Caco-2 (cell line): ENCODE measurements at regions of chr7 and their contacts with region 1.

Region 1: DNA sequence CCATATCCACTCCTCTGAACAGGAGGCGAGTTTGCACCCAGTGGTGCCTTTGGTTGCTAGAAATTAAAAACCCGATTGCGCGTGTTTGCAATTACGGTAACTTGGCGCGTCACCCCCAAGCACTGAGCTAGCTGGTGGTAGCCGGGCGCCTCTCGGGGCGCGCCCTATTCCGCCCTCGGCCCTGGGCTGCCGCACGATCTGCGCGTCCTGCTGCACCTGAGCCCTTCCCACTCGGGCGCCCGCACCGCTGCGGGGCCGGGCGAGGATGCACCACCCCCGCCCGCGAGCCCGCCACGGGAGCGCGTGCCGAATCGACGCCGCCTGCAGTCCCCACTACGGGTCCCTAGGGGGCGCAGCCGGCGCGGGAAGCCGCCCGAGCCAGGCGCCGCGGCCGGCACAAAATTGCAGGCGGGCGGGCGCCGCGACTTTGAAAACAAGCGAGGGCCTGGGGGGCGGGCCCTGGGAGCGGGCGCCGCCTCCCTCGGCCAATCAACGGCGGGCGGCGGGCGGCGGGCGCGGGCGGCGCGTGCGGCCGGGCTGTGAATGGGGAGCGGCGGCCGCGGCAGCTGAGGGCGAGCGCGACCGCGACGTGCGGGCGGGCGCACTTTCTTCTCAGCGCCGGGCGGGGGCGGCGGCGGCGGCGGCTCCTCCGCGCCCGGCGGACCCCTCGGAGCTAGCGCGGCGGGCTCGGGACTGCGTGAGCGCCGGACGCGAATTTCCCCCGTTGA is at the start of gene SDK1:
- DNase-seq: peak; percentile 85 to 95
- H3K4me3 ChIP-seq: peak within 1 kb of the TSS; percentile 63
- H3K4me3 Mint-ChIP-seq: peak within 1 kb of the TSS; percentile 67
- H3K27ac Mint-ChIP-seq: no peak within 1 kb of the TSS
- H3K4me1 ChIP-seq: no peaks in the 10 kb centered on the region
- H3K4me1 Mint-ChIP-seq: no peaks in the 10 kb centered on the region
- H3K27me3 ChIP-seq: no peaks in the 10 kb centered on the region; the same call in 1 of the 2 replicates
- H3K27me3 Mint-ChIP-seq: no peaks in the 10 kb centered on the region
- CTCF ChIP-seq: peak; percentile 65 to 86
- total RNA-seq, gene SDK1: 6.2 and 7.1 TPM in 2 replicates

Region 2: GRCh38 chr7:2542026-2542915 is 758.5 kb before region 1 on chr7:
- CTCF ChIA-PET with region 1: no interaction called
- POLR2A ChIA-PET with region 1: no interaction called
- intact Hi-C with region 1: no loop called
- DNase-seq: no peak
- H3K4me3 ChIP-seq: no peak overlapping the region
- H3K4me3 Mint-ChIP-seq: no peak overlapping the region
- H3K27ac Mint-ChIP-seq: no peak overlapping the region
- H3K4me1 ChIP-seq: no peaks in the 10 kb centered on the region
- H3K4me1 Mint-ChIP-seq: no peaks in the 10 kb centered on the region
- H3K27me3 ChIP-seq: no peaks in the 10 kb centered on the region
- H3K27me3 Mint-ChIP-seq: no peaks in the 10 kb centered on the region
- CTCF ChIP-seq: no peak

Region 3: DNA sequence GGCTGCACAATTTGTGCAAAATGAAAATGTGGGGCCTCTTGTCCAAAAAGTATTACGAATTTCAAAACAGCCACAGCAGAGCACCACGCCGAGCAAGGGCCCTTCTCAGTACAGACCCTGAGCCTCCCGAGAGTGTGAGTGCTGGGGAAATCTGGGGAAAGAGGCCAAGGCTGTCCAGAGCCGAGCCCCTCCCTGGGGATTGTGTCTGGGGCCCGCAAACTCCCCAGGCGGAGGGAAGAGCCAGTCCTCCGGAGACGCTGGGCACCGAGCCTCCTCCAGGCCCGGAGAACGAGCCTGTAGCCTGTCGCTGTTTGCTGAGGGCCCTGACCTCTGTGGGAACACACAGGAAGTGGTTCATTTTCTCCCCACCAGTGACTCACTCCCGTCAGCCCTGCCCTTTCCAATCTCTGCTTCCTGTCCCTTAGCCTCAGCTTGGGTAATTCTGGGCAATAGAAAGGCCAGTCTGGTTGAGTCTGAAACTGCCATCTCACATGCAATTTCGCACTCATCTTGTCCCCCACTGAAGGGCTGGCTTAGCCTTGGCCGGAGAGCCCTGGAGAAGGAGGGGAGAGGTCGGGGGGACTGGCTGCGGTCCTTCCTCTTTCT is 437.3 kb before region 1 on chr7:
- CTCF ChIA-PET with region 1: no interaction called
- POLR2A ChIA-PET with region 1: no interaction called
- intact Hi-C with region 1: loop called (anchors 2 kb)
- DNase-seq: no peak
- H3K4me3 ChIP-seq: no peak overlapping the region
- H3K4me3 Mint-ChIP-seq: no peak overlapping the region
- H3K27ac Mint-ChIP-seq: peak overlapping the region; percentile 82
- H3K4me1 ChIP-seq: peaks cover 7% of the 10 kb centered on the region; the same call in 1 of the 2 replicates
- H3K4me1 Mint-ChIP-seq: no peaks in the 10 kb centered on the region
- H3K27me3 ChIP-seq: no peaks in the 10 kb centered on the region
- H3K27me3 Mint-ChIP-seq: no peaks in the 10 kb centered on the region
- CTCF ChIP-seq: no peak

Region 4: GRCh38 chr7:3399858-3400257 is 99.0 kb after region 1 on chr7:
- CTCF ChIA-PET with region 1: interaction called, 11 read pairs
- POLR2A ChIA-PET with region 1: no interaction called
- intact Hi-C with region 1: loop called (anchors 2 kb)
- DNase-seq: peak; percentile 53 to 54
- H3K4me3 ChIP-seq: no peak overlapping the region
- H3K4me3 Mint-ChIP-seq: no peak overlapping the region
- H3K27ac Mint-ChIP-seq: no peak overlapping the region
- H3K4me1 ChIP-seq: no peaks in the 10 kb centered on the region
- H3K4me1 Mint-ChIP-seq: no peaks in the 10 kb centered on the region
- H3K27me3 ChIP-seq: no peaks in the 10 kb centered on the region
- H3K27me3 Mint-ChIP-seq: peaks cover 4% of the 10 kb centered on the region
- CTCF ChIP-seq: peak; percentile 37 to 62

Region 5: GRCh38 chr7:3469641-3470040 is 168.8 kb after region 1 on chr7:
- CTCF ChIA-PET with region 1: no interaction called
- POLR2A ChIA-PET with region 1: no interaction called
- intact Hi-C with region 1: loop called (anchors 5 kb)
- DNase-seq: peak in 1 of 2 experiments; percentile 33
- H3K4me3 ChIP-seq: no peak overlapping the region
- H3K4me3 Mint-ChIP-seq: no peak overlapping the region
- H3K27ac Mint-ChIP-seq: no peak overlapping the region
- H3K4me1 ChIP-seq: peaks cover 24% of the 10 kb centered on the region
- H3K4me1 Mint-ChIP-seq: peaks cover 29% of the 10 kb centered on the region
- H3K27me3 ChIP-seq: no peaks in the 10 kb centered on the region
- H3K27me3 Mint-ChIP-seq: no peaks in the 10 kb centered on the region
- CTCF ChIP-seq: no peak

Region 6: DNA sequence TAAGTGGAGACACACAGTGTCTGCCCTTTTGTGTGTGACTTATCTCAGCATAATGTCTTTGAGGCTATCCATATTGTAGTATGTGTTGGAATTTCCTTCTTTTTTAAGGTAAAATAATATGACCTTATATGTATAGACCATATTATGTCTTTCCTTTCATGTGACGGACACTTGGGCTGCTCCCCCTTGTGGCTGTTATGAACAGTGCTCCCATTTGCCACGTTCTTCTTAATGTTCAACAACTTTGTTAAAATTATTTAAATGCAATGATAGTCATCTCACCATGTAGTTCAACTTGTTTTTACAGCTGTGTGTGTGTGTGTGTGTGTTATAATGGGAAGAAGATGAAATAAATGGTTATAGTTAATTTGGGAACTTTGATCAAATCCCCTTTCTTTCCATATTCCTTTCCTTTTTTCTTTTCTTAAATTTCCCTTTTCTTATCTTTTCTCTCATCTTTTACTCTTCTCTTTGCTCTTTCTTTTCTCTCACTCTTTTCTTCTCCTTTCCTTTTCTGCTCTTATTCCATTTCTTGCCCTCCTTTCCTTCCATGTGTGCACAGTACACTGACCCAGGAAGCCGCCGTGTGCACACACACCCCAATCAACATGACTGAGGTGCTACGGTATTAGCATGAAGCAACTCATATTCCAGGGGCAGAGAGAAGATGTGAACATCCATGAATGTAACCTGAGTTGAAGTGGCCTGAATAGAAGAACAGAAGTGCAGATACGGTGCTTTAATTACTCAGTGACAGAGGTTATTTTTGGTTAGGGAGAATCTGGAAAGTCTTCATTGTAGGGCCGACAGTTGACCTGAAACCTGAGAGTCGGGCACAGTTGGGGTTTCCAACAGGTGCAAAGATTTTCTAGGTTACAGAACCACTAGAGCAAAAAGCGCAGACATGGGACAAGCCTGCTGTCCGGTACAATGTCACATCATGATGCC is 596.9 kb after region 1 on chr7:
- CTCF ChIA-PET with region 1: no interaction called
- POLR2A ChIA-PET with region 1: no interaction called
- intact Hi-C with region 1: loop called (anchors 2 kb)
- DNase-seq: peak in 1 of 2 experiments; percentile 47
- H3K4me3 ChIP-seq: no peak overlapping the region
- H3K4me3 Mint-ChIP-seq: no peak overlapping the region
- H3K27ac Mint-ChIP-seq: no peak overlapping the region
- H3K4me1 ChIP-seq: no peaks in the 10 kb centered on the region
- H3K4me1 Mint-ChIP-seq: no peaks in the 10 kb centered on the region
- H3K27me3 ChIP-seq: no peaks in the 10 kb centered on the region
- H3K27me3 Mint-ChIP-seq: peaks cover 3% of the 10 kb centered on the region
- CTCF ChIP-seq: peak; percentile 66 to 82